PC-9 (cell line): ENCODE measurements at regions of chr13 and their contacts with region 1.

Region 1: GRCh38 chr13:27339299-27339698 is 68.7 kb downstream of the RASL11A start:
- DNase-seq: no peak
- H3K4me3 ChIP-seq: no peak overlapping the region
- H3K27ac ChIP-seq: no peak overlapping the region
- H3K4me1 ChIP-seq: peaks cover 25% of the 10 kb centered on the region
- H3K27me3 ChIP-seq: no peaks in the 10 kb centered on the region
- CTCF ChIP-seq: peak; percentile 70

Region 2: DNA sequence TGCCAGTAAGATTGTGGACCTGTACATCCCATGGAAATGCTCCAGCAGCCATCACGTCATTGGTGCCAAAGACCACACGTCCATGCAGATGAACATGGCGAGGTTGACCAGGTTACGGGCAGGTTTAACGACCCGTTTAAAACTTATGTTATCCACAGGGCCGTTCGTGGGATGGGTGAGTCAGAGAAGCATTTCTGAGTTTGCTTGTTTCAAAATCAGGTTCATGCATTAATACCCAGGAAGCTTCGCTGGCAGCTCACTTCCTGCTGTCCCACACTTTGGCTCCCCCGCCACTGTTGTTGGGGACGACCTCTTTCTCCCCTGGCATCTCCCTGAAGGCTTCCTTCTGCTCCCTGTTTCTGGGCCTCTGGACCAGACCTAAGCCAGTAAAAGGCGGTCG is 361.7 kb before region 1 on chr13:
- CTCF ChIA-PET with region 1: interaction called, 15 read pairs
- POLR2A ChIA-PET with region 1: no interaction called
- intact Hi-C with region 1: no loop called
- DNase-seq: no peak
- H3K4me3 ChIP-seq: no peak overlapping the region
- H3K27ac ChIP-seq: no peak overlapping the region
- H3K4me1 ChIP-seq: peaks cover 2% of the 10 kb centered on the region
- H3K27me3 ChIP-seq: 0 out of 2 replicates have a peak, but pooled peaks cover 21% of the 10 kb centered on the region
- CTCF ChIP-seq: no peak

Region 3: GRCh38 chr13:27273658-27274425 is 65.5 kb before region 1 on chr13:
- CTCF ChIA-PET with region 1: no interaction called
- POLR2A ChIA-PET with region 1: no interaction called
- intact Hi-C with region 1: no loop called
- DNase-seq: no peak
- H3K4me3 ChIP-seq: no peak overlapping the region
- H3K27ac ChIP-seq: no peak overlapping the region
- H3K4me1 ChIP-seq: peaks cover 34% of the 10 kb centered on the region
- H3K27me3 ChIP-seq: no peaks in the 10 kb centered on the region
- CTCF ChIP-seq: no peak

Region 4: GRCh38 chr13:27533155-27533643 is 193.9 kb after region 1 on chr13:
- CTCF ChIA-PET with region 1: no interaction called
- POLR2A ChIA-PET with region 1: no interaction called
- intact Hi-C with region 1: no loop called
- DNase-seq: peak; percentile 48 to 81
- H3K4me3 ChIP-seq: peak overlapping the region; percentile 44; the same call in 1 of the 2 replicates
- H3K27ac ChIP-seq: no peak overlapping the region
- H3K4me1 ChIP-seq: no peaks in the 10 kb centered on the region
- H3K27me3 ChIP-seq: no peaks in the 10 kb centered on the region
- CTCF ChIP-seq: peak; percentile 87

Region 5: DNA sequence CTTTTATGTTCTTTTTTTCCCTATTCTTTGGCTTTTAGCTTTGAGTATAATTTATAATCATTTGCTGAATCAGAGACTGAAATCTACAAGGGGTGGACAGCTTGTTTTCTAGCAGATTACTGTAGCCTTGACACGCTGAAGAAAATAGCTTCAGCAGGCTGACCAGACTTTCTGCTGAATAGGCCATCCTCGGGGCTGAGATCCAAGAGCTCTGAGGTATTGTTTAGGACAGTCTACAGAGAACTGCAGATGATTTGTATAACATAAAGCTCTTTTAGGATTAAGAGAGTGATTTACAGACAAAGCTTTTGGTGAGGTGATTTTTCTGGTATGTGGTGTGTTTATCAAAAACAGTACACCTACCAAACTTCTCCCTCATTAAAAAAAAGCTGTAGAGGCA is 299.2 kb after region 1 on chr13:
- CTCF ChIA-PET with region 1: interaction called, 20 read pairs
- POLR2A ChIA-PET with region 1: no interaction called
- intact Hi-C with region 1: no loop called
- DNase-seq: no peak
- H3K4me3 ChIP-seq: no peak overlapping the region
- H3K27ac ChIP-seq: no peak overlapping the region
- H3K4me1 ChIP-seq: no peaks in the 10 kb centered on the region
- H3K27me3 ChIP-seq: no peaks in the 10 kb centered on the region
- CTCF ChIP-seq: no peak